B cell (primary cell): ENCODE measurements at regions of chr7 and their contacts with region 1.

Region 1: GRCh38 chr7:99616359-99617191 is at the start of gene ZSCAN25:
- DNase-seq: peak; percentile 91
- ATAC-seq: peak; percentile 95
- H3K4me3 ChIP-seq: peak within 1 kb of the TSS; percentile 86 to 99 (median 95)
- H3K4me3 Mint-ChIP-seq: peak within 1 kb of the TSS; percentile 98
- H3K27ac ChIP-seq: peak within 1 kb of the TSS; percentile 73 to 90
- H3K27ac Mint-ChIP-seq: peak within 1 kb of the TSS; percentile 95
- H3K4me1 ChIP-seq: peaks cover 17 to 18% of the 10 kb centered on the region in 2 donors
- H3K4me1 Mint-ChIP-seq: peaks cover 28% of the 10 kb centered on the region
- H3K27me3 ChIP-seq: no peaks in the 10 kb centered on the region
- H3K27me3 Mint-ChIP-seq: no peaks in the 10 kb centered on the region
- CTCF ChIP-seq: peak; percentile 7
- total RNA-seq, gene ZSCAN25: 37.1 and 39.5 TPM in 2 replicates

Region 2: GRCh38 chr7:99325545-99326407 is 290.8 kb before region 1 on chr7 and contains the start of gene ARPC1A:
- CTCF ChIA-PET with region 1: no interaction called
- POLR2A ChIA-PET with region 1: no interaction called
- intact Hi-C with region 1: loop called (anchors 5 kb)
- DNase-seq: peak; percentile 95
- ATAC-seq: peak; percentile 90
- H3K4me3 ChIP-seq: peak within 1 kb of the TSS; percentile 88 to 99 (median 91)
- H3K4me3 Mint-ChIP-seq: peak within 1 kb of the TSS; percentile 85
- H3K27ac ChIP-seq: peak within 1 kb of the TSS; percentile 56 to 80
- H3K27ac Mint-ChIP-seq: peak within 1 kb of the TSS; percentile 92
- H3K4me1 ChIP-seq: peaks cover 22 to 28% of the 10 kb centered on the region in 2 donors
- H3K4me1 Mint-ChIP-seq: peaks cover 36% of the 10 kb centered on the region
- H3K27me3 ChIP-seq: no peaks in the 10 kb centered on the region
- H3K27me3 Mint-ChIP-seq: no peaks in the 10 kb centered on the region
- CTCF ChIP-seq: no peak
- total RNA-seq, gene ARPC1A: 41.7 and 47.8 TPM in 2 replicates

Region 3: GRCh38 chr7:99558306-99559174 is 58.0 kb before region 1 on chr7 and contains the start of gene ZNF655:
- CTCF ChIA-PET with region 1: no interaction called
- POLR2A ChIA-PET with region 1: interaction called, 6 read pairs
- intact Hi-C with region 1: loop called (anchors 1 kb)
- DNase-seq: peak; percentile 94
- ATAC-seq: peak; percentile 80
- H3K4me3 ChIP-seq: peak within 1 kb of the TSS; percentile 77 to 97 (median 92)
- H3K4me3 Mint-ChIP-seq: peak within 1 kb of the TSS; percentile 98
- H3K27ac ChIP-seq: peak within 1 kb of the TSS; percentile 91 to 98
- H3K27ac Mint-ChIP-seq: peak within 1 kb of the TSS; percentile 98
- H3K4me1 ChIP-seq: peaks cover 19 to 25% of the 10 kb centered on the region in 2 donors
- H3K4me1 Mint-ChIP-seq: peaks cover 42% of the 10 kb centered on the region
- H3K27me3 ChIP-seq: no peaks in the 10 kb centered on the region
- H3K27me3 Mint-ChIP-seq: no peaks in the 10 kb centered on the region
- CTCF ChIP-seq: no peak
- total RNA-seq, gene ZNF655: 150 and 154 TPM in 2 replicates